ENCODE measurements at regions of chr12 and their contacts with region 1.

Region 1: GRCh38 chr12:57904848-57905811 is 36.2 kb upstream of the ATP23 start:
- DNase-seq: peak; percentile 94
- H3K4me3 ChIP-seq: no peak overlapping the region
- H3K27ac ChIP-seq: peak overlapping the region; percentile 15
- H3K4me1 ChIP-seq: peaks cover 3% of the 10 kb centered on the region
- H3K27me3 ChIP-seq: no peaks in the 10 kb centered on the region
- CTCF ChIP-seq: peak; percentile 100

Region 2: DNA sequence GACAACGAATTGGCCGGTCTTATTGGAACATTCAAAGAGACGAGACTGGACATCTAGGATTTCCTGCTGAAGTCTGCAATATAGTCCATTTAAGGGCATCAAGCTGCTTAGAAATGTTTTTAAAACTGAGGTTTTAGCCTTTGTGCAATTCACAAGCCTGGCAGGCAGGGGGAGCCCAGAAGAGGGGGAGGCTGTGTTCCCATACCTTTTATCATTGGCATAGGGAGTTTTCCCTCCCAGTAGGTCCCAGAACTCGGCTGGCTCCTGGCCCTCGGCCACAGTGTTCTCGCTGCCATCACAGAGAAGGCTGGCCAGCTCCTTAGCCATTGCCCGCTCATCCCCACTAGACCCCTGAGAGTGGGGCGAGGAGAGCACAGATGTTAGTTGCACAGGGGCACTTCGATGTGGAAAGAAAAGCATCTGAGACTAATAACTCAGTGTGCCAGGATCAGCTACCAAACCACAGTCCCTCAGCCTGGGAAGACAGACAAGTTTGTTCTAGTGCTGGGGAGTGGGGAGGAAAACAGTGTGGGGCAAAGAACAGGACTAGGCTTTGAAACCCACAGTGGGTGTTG is 101.7 kb before region 1 on chr12:
- intact Hi-C with region 1: loop called (anchors 5 kb)
- DNase-seq: peak; percentile 45
- H3K4me3 ChIP-seq: no peak overlapping the region
- H3K27ac ChIP-seq: no peak overlapping the region
- H3K4me1 ChIP-seq: no peaks in the 10 kb centered on the region
- H3K27me3 ChIP-seq: no peaks in the 10 kb centered on the region
- CTCF ChIP-seq: peak; percentile 76

Region 3: DNA sequence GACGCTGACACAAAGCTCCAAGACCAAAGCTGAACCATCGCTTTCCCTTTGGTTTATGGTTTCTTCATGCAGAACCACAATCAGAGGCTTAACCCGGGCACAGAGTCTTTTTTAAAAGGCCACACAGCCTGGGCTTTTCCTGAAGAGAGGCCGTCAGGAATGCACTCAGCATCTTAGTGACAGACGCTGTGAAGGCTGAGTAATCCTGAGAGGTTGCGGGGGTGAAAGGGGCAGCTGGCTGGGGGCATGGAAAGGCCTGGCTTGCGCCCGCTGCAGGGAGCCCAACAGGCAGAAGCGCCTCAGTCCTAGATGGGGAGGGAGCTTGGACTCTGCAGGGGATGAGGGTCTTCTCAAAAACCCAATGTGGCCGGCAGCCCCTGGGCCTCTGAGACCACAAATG is 72.2 kb before region 1 on chr12:
- intact Hi-C with region 1: loop called (anchors 5 kb)
- DNase-seq: no peak
- H3K4me3 ChIP-seq: no peak overlapping the region
- H3K27ac ChIP-seq: no peak overlapping the region
- H3K4me1 ChIP-seq: peaks cover 59% of the 10 kb centered on the region
- H3K27me3 ChIP-seq: no peaks in the 10 kb centered on the region
- CTCF ChIP-seq: no peak